Mammary epithelial cell (primary cell): ENCODE measurements at regions of chr9 and their contacts with region 1.

Region 1: GRCh38 chr9:112793213-112793810 is 42.8 kb downstream of the SNX30 start:
- DNase-seq: peak; percentile 43
- H3K4me3 ChIP-seq: no peak overlapping the region
- H3K27ac ChIP-seq: no peak overlapping the region
- H3K4me1 ChIP-seq: no peaks in the 10 kb centered on the region
- H3K27me3 ChIP-seq: no peaks in the 10 kb centered on the region
- CTCF ChIP-seq: peak; percentile 83 to 90

Region 2: DNA sequence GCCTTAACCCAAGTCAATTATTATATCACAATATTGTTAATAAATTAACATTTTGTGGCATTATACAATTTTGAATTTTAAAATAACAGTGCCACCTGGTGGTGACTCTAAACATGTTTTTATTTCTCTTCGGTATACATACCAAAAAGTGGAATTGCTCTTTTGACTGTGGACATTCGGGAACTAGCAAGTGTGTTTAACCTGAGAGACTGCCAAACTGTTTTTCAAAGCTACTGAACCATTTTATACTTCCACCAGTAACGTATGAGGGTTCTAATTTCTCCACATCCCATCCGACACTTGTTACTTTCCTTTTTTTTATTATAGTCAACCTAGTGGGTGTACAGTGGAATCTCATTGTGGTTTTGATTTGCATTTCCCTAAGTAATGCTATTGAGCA is 431.7 kb before region 1 on chr9:
- CTCF ChIA-PET with region 1: no interaction called
- dilution Hi-C with region 1: no loop called
- in situ Hi-C with region 1: no loop called
- intact Hi-C with region 1: loop called (anchors 10 kb)
- DNase-seq: peak; percentile 29
- H3K4me3 ChIP-seq: no peak overlapping the region
- H3K27ac ChIP-seq: no peak overlapping the region
- H3K4me1 ChIP-seq: peaks cover 6% of the 10 kb centered on the region
- H3K27me3 ChIP-seq: no peaks in the 10 kb centered on the region
- CTCF ChIP-seq: peak; percentile 24 to 31

Region 3: DNA sequence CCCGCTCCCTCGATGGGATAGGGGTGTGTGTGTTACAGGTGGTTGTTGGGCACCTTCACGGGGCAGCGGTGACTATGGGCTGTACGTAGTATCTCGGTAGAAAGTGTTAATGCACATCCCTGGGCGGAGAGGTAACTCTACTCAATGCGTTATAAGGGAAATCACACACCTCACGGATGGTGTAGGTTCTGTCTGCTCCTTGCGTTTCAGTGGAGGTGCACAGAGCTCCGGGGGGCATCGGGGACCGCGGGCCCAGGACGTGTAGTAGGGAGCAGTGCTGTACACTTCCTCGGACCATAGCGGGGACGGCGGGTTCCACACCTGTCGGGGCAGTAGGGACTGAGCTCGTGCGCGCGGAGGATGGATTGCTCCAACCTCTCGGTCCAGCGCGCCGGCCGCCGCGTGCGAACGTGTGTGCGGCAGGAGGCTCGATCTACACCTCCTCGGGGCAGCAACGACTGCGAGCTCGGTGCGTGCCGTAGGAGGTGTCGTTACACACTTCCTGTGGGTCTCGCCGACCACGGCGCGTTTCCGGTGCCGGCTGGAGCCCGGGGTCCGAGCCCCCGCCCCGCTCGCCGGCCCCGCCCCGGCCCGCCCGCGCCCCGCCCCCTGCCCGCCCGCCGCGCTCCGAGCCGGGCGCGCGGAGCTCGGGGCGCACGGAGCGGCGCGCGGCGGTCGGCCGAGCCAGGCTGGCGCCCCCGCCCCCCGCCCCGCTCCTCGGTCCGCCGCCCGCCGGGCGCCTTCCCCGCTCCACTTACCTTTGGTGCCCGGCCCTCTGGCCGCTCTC is 306.9 kb before region 1 on chr9 and contains the start of gene KIAA1958:
- CTCF ChIA-PET with region 1: no interaction called
- dilution Hi-C with region 1: no loop called
- in situ Hi-C with region 1: no loop called
- intact Hi-C with region 1: loop called (anchors 10 kb)
- DNase-seq: peak; percentile 73
- H3K4me3 ChIP-seq: peak within 1 kb of the TSS; percentile 65 to 88 (median 75)
- H3K27ac ChIP-seq: no peak within 1 kb of the TSS
- H3K4me1 ChIP-seq: peaks cover 13% of the 10 kb centered on the region
- H3K27me3 ChIP-seq: no peaks in the 10 kb centered on the region
- CTCF ChIP-seq: no peak
- total RNA-seq, gene KIAA1958: 2.5 TPM

Region 4: GRCh38 chr9:112717661-112718341 is 75.5 kb before region 1 on chr9 and contains the start of gene INIP:
- CTCF ChIA-PET with region 1: no interaction called
- dilution Hi-C with region 1: no loop called
- in situ Hi-C with region 1: no loop called
- intact Hi-C with region 1: loop called (anchors 1 kb)
- DNase-seq: peak; percentile 97
- H3K4me3 ChIP-seq: peak within 1 kb of the TSS; percentile 63 to 91 (median 80)
- H3K27ac ChIP-seq: peak within 1 kb of the TSS; percentile 70
- H3K4me1 ChIP-seq: peaks cover 8% of the 10 kb centered on the region
- H3K27me3 ChIP-seq: no peaks in the 10 kb centered on the region
- CTCF ChIP-seq: peak in 1 of 2 donors; percentile 29
- total RNA-seq, gene INIP: 23.2 to 24.3 TPM

Region 5: DNA sequence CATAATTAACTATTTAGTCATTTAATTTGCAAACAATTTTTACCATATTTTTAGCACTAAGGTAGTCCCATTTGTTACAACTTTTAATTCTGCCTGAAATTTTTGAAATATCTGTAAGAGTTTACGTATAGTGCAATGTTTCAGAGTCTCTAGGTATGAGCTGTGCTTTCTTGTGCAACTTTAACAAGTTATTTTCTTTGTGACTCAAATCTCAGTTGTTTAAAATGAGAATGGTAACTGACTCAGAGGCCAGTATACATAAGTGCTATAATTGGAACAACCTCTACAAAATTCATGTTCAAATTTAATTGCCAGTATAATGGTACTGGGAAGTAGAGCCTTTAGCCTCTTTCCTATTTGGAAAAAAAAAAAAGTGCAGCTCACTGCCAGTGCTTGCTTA is 232.9 kb after region 1 on chr9:
- CTCF ChIA-PET with region 1: no interaction called
- dilution Hi-C with region 1: no loop called
- in situ Hi-C with region 1: no loop called
- intact Hi-C with region 1: no loop called
- DNase-seq: peak; percentile 27
- H3K4me3 ChIP-seq: no peak overlapping the region
- H3K27ac ChIP-seq: no peak overlapping the region
- H3K4me1 ChIP-seq: no peaks in the 10 kb centered on the region
- H3K27me3 ChIP-seq: no peaks in the 10 kb centered on the region
- CTCF ChIP-seq: no peak